A673 (cell line): ENCODE measurements at regions of chr1 and their contacts with region 1.

Region 1: DNA sequence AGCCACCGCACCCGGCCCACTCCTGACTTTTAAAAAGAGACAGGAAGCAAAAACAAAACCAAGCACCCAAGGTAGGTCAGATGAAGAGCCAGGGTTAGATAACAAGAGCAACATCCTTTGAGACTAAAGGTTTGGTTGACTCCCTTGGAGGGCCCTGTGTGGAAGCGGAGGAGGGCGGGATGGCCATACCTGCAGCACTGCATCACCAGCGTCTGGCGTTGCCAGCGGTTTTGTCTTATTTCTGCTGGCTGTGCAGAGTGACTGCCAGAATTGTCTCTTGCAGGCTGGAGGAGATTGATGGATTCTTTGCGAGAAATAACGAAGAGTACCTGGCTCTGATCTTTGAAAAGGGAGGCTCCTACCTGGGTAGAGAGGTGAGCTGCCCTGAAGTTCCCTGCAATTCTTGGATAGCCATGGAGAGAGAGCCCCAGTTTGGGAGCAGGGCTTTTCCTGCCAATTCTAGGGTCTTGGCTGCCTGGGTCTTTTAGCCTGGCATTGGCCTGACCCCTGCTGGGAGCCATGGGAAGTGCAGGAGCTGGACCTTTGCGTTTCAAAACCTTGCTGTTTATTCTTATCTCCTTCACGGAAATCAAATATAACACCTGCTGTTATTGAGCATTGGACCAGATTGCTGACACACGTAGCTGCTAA is 24.0 kb downstream of the QSOX1 start:
- DNase-seq: peak; percentile 71
- H3K4me3 ChIP-seq: no peak overlapping the region
- H3K27ac ChIP-seq: no peak overlapping the region
- H3K4me1 ChIP-seq: no peaks in the 10 kb centered on the region
- H3K27me3 ChIP-seq: no peaks in the 10 kb centered on the region
- CTCF ChIP-seq: peak; percentile 96

Region 2: DNA sequence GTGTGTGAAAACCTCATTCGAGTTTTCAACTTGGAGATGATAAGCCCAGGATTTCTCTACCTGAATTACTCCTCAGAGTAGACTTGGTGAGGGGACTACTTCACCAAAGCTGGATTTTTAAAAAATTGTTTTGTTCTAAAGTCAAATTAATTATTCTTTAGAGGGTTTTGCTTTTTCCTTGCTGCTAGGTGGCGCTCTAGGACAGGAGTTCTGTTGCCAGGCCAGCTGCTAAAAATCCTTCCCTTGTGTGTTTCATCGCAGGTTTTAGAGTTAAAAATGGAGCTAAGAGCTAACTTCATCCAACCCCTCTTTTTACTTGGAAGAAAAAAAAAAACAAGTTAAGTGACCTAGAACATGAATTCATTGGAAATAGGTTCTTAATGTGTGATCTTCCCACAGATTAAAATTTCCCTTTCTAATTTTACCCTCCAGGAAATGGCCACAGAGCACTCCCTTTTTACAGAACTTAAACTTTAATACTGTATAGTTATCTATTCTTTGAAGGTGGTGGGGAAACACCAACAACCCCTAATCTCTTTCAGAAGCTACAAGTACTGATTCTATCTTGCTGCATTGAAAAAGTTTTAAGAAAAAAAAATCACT is 472.2 kb before region 1 on chr1:
- CTCF ChIA-PET with region 1: interaction called, 10 read pairs
- POLR2A ChIA-PET with region 1: no interaction called
- intact Hi-C with region 1: loop called (anchors 5 kb)
- DNase-seq: peak; percentile 75
- H3K4me3 ChIP-seq: no peak overlapping the region
- H3K27ac ChIP-seq: no peak overlapping the region
- H3K4me1 ChIP-seq: no peaks in the 10 kb centered on the region
- H3K27me3 ChIP-seq: no peaks in the 10 kb centered on the region
- CTCF ChIP-seq: peak; percentile 88

Region 3: GRCh38 chr1:179867807-179868330 is 310.8 kb before region 1 on chr1:
- CTCF ChIA-PET with region 1: interaction called, 11 read pairs
- POLR2A ChIA-PET with region 1: no interaction called
- intact Hi-C with region 1: loop called (anchors 1 kb)
- DNase-seq: peak; percentile 81
- H3K4me3 ChIP-seq: no peak overlapping the region
- H3K27ac ChIP-seq: no peak overlapping the region
- H3K4me1 ChIP-seq: peaks cover 17% of the 10 kb centered on the region
- H3K27me3 ChIP-seq: no peaks in the 10 kb centered on the region
- CTCF ChIP-seq: peak; percentile 86

Region 4: DNA sequence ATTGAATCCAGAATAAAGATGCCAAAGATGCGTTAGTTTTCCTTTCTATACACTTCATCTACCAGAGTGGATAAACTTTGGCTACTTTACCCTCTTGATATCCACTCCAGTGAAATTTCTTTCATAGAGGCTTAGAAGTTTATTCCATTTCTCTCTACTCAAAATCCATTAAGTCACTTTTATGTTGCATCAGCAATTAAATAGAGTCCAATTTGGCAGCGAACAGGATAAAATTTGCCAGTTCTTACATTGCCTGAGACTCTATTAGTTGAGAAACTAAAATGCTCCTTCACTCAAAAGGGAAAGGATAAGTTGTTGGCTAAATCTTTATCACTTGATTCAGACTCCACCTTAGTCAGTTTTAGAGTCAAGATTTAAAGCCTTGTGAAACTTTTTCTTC is 265.9 kb after region 1 on chr1:
- CTCF ChIA-PET with region 1: no interaction called
- POLR2A ChIA-PET with region 1: no interaction called
- intact Hi-C with region 1: no loop called
- DNase-seq: no peak
- H3K4me3 ChIP-seq: no peak overlapping the region
- H3K27ac ChIP-seq: no peak overlapping the region
- H3K4me1 ChIP-seq: no peaks in the 10 kb centered on the region
- H3K27me3 ChIP-seq: no peaks in the 10 kb centered on the region
- CTCF ChIP-seq: no peak